ENCODE measurements at regions of chr20 and their contacts with region 1.

Region 1: GRCh38 chr20:23420943-23421931 is at the start of gene NAPB:
- DNase-seq: peak; percentile 96
- H3K4me3 ChIP-seq: peak within 1 kb of the TSS; percentile 100
- H3K27ac ChIP-seq: peak within 1 kb of the TSS; percentile 34
- H3K4me1 ChIP-seq: peaks cover 19% of the 10 kb centered on the region
- CTCF ChIP-seq: peak; percentile 49; the same call in 1 of the 2 replicates
- total RNA-seq, gene NAPB: 9.3 and 12.5 TPM in 2 replicates

Region 2: GRCh38 chr20:23357767-23358591 is 63.3 kb before region 1 on chr20:
- CTCF ChIA-PET with region 1: no interaction called
- POLR2A ChIA-PET with region 1: interaction called, 11 read pairs
- intact Hi-C with region 1: loop called (anchors 5 kb)
- DNase-seq: peak; percentile 99
- H3K4me3 ChIP-seq: peak overlapping the region; percentile 79
- H3K27ac ChIP-seq: peak overlapping the region; percentile 63
- H3K4me1 ChIP-seq: peaks cover 30% of the 10 kb centered on the region
- CTCF ChIP-seq: no peak; the same call in 1 of the 2 replicates

Region 3: GRCh38 chr20:23374441-23374840 is 46.8 kb before region 1 on chr20:
- CTCF ChIA-PET with region 1: no interaction called
- POLR2A ChIA-PET with region 1: no interaction called
- intact Hi-C with region 1: no loop called
- DNase-seq: no peak
- H3K4me3 ChIP-seq: no peak overlapping the region
- H3K27ac ChIP-seq: no peak overlapping the region
- H3K4me1 ChIP-seq: no peaks in the 10 kb centered on the region
- CTCF ChIP-seq: no peak

Region 4: DNA sequence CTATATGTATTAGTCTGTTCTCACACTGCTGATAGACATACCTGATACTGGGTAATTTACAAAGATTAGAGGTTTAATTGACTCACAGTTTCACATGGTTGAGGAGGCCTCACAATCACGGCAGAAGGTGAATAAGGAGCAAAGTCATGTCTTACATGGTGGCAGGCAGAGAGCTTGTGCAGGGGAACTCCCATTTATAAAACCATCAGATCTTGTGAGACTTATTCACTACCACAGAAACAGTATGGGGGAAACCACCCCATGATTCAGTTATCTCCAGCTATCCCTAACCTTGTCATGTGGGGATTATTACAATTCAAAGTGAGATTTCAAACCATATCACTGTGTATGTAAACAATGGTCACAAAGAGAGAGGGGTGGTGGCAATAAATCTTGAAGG is 76.3 kb after region 1 on chr20:
- CTCF ChIA-PET with region 1: no interaction called
- POLR2A ChIA-PET with region 1: no interaction called
- intact Hi-C with region 1: no loop called
- DNase-seq: no peak
- H3K4me3 ChIP-seq: no peak overlapping the region
- H3K27ac ChIP-seq: no peak overlapping the region
- H3K4me1 ChIP-seq: no peaks in the 10 kb centered on the region
- CTCF ChIP-seq: no peak